GM12878 (cell line): ENCODE measurements at regions of chr10 and their contacts with region 1.

Region 1: GRCh38 chr10:8677642-8678041 is 623.2 kb downstream of the GATA3 start:
- DNase-seq: no peak
- ATAC-seq: no peak
- H3K4me3 ChIP-seq: no peak overlapping the region
- H3K27ac ChIP-seq: no peak overlapping the region
- H3K4me1 ChIP-seq: no peaks in the 10 kb centered on the region
- H3K27me3 ChIP-seq: no peaks in the 10 kb centered on the region
- CTCF ChIP-seq: no peak
- EP300 ChIP-seq: no peak
- POLR2A ChIP-seq: no peak
- RAD21 ChIP-seq: no peak

Region 2: GRCh38 chr10:8416192-8416701 is 261.4 kb before region 1 on chr10:
- CTCF ChIA-PET with region 1: no interaction called
- POLR2A ChIA-PET with region 1: no interaction called
- RAD21 ChIA-PET with region 1: no interaction called
- SMC1A ChIA-PET with region 1: no interaction called
- in situ Hi-C with region 1: no loop called
- intact Hi-C with region 1: no loop called
- DNase-seq: no peak
- ATAC-seq: peak; percentile 84
- H3K4me3 ChIP-seq: no peak overlapping the region
- H3K27ac ChIP-seq: no peak overlapping the region
- H3K4me1 ChIP-seq: no peaks in the 10 kb centered on the region
- H3K27me3 ChIP-seq: no peaks in the 10 kb centered on the region
- CTCF ChIP-seq: no peak
- EP300 ChIP-seq: peak; percentile 10 to 48; a peak in 1 of 4 replicates
- POLR2A ChIP-seq: no peak
- RAD21 ChIP-seq: no peak

Region 3: DNA sequence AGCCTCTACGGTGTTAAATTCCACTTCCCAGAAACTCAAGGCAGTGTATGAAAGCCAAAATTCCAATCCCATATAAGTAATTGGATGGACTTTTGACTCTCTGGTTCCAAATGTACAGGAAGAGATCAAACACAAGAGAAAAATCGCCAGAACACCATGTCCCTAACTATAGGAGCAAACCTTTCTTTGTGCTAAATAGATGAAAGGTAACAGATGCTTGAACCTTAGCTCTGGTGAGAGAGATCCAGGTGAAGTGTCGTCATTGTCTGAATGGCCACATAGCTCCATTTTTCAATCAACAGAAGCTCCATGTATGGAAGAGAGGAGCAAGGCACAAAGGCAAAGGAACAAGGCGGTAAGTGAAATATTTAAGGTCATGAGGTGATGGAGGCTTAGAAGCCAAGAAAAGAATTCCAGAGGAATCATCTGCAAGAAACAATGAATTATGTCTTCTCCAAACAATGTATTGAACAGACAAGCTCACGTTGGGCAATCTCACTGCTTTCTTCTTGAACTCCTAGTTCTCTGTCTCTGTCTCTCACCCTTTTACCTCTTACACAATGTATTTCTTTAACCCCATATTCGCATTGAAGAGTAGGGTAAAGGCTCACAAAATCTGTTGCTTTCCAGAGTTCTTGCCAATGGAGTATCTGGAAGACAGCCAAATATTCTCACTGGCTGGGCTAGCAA is 38.0 kb before region 1 on chr10:
- CTCF ChIA-PET with region 1: no interaction called
- POLR2A ChIA-PET with region 1: no interaction called
- RAD21 ChIA-PET with region 1: no interaction called
- SMC1A ChIA-PET with region 1: no interaction called
- in situ Hi-C with region 1: no loop called
- intact Hi-C with region 1: no loop called
- DNase-seq: no peak
- ATAC-seq: no peak
- H3K4me3 ChIP-seq: no peak overlapping the region
- H3K27ac ChIP-seq: no peak overlapping the region
- H3K4me1 ChIP-seq: no peaks in the 10 kb centered on the region
- H3K27me3 ChIP-seq: no peaks in the 10 kb centered on the region
- CTCF ChIP-seq: no peak
- EP300 ChIP-seq: no peak
- POLR2A ChIP-seq: no peak
- RAD21 ChIP-seq: no peak

Region 4: DNA sequence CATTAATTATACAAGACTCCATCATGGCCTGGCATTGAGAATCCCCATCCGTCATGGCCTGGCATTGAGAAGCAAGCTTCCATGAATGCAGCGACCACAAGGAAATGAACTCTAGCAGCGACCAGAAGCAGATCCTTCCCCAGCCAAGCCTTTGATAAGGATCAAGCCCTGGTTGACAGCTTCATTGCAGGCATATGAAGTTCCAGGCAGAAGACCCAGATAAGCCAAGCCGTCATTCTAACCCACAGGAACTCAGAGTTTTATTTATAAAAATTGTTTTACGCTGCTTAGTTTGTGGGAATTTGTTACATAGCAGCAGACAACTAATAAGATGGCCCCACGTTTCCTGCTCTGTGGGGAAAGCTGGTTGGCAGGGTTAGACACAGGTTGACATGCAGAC is 19.1 kb after region 1 on chr10:
- CTCF ChIA-PET with region 1: no interaction called
- POLR2A ChIA-PET with region 1: no interaction called
- RAD21 ChIA-PET with region 1: no interaction called
- SMC1A ChIA-PET with region 1: no interaction called
- in situ Hi-C with region 1: no loop called
- intact Hi-C with region 1: loop called (anchors 2 kb)
- DNase-seq: no peak
- ATAC-seq: no peak
- H3K4me3 ChIP-seq: no peak overlapping the region
- H3K27ac ChIP-seq: no peak overlapping the region
- H3K4me1 ChIP-seq: no peaks in the 10 kb centered on the region
- H3K27me3 ChIP-seq: no peaks in the 10 kb centered on the region
- CTCF ChIP-seq: no peak
- EP300 ChIP-seq: no peak
- POLR2A ChIP-seq: no peak
- RAD21 ChIP-seq: no peak